Activated T-helper 1 cell treated with anti-CD3 and anti-CD28 coated beads, Interleukin-12 subunit alpha, Interleukin-12 subunit beta, Interleukin-2, Interleukin-4 antibody, amounts not matched to agents 30 ng/mL and 10 ng/mL and 1 ng/mL, durations not matched to agents 14 hours and 24 hours and 36 hours (primary cell): ENCODE measurements at regions of chr6 and their contacts with region 1.

Region 1: GRCh38 chr6:36027501-36028087 is at the start of gene MAPK14:
- DNase-seq: peak; percentile 99
- H3K4me3 Mint-ChIP-seq: peak within 1 kb of the TSS; percentile 92
- H3K27ac Mint-ChIP-seq: peak within 1 kb of the TSS; percentile 85
- H3K4me1 Mint-ChIP-seq: peaks cover 39% of the 10 kb centered on the region
- H3K27me3 Mint-ChIP-seq: peaks cover 27% of the 10 kb centered on the region
- total RNA-seq, gene MAPK14: 41.3 and 49.7 TPM in 2 replicates

Region 2: GRCh38 chr6:35920793-35921732 is 106.5 kb before region 1 on chr6 and contains the start of gene SRPK1:
- intact Hi-C with region 1: loop called (anchors 1 kb)
- DNase-seq: peak; percentile 85
- H3K4me3 Mint-ChIP-seq: peak within 1 kb of the TSS; percentile 96
- H3K27ac Mint-ChIP-seq: peak within 1 kb of the TSS; percentile 93
- H3K4me1 Mint-ChIP-seq: peaks cover 49% of the 10 kb centered on the region
- H3K27me3 Mint-ChIP-seq: no peaks in the 10 kb centered on the region
- total RNA-seq, gene SRPK1: 149 and 182 TPM in 2 replicates

Region 3: DNA sequence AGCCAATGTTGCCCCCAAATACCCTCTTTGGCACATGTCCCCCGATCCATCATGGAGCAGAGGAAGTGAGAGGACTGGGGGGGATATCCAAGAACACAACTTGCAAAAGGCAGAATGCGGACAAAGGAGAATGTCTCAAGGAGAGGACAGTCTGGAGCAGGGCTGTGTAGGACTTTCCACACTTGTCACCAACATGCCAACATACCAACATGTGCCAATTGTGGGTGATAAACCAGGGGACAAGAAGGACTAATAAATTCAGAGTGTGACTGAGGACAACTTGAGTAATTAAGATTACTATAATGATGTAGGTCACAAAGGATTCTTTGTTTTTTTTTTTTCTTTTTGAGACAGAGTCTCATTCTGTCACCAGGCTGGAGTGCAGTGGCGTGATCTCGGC is 11.9 kb before region 1 on chr6:
- intact Hi-C with region 1: no loop called
- DNase-seq: no peak
- H3K4me3 Mint-ChIP-seq: no peak overlapping the region
- H3K27ac Mint-ChIP-seq: no peak overlapping the region
- H3K4me1 Mint-ChIP-seq: no peaks in the 10 kb centered on the region
- H3K27me3 Mint-ChIP-seq: peaks cover 12% of the 10 kb centered on the region

Region 4: DNA sequence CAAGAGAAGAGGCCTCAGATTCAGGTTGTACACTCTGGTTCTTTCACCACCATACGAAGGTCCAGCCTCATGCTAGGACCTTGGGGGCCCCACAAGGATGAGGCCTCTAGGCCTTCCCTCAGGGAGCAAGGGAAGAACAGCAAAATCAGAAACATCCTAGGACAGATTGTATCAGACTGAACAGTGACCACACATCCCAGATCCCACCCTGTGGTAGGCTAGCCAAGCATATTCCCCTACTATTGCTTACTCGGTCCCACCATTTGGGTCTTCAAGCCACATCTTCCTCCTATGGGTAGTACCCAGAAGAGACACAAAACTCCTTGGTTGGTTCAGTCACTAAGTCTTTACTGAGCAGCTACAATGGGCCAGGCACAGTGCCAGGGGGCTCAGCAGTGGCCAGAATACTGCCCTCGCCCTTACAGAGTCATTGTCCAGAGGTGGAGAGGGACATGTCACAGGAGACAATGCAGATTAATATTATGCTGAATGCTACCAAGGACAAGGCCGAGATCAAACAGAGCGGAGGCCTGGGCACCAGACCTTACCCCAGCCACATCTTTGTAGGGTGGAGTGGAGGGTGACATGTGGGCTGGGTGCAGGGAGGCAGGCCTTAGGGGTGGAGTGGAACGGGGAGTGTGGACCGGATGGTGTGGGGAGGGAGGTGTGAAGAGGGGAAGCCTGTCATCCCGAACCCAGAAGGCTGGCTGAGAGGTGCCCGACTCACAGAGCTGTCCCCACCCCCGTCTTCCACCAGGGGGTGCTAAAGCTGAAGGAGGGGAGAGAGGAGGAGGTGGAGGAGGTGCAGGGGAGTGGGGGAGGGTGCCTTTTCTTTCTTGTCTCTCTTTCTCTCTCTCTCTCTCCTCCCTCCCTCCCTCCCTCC is 95.9 kb after region 1 on chr6:
- intact Hi-C with region 1: loop called (anchors 1 kb)
- DNase-seq: peak; percentile 88
- H3K4me3 Mint-ChIP-seq: peak overlapping the region; percentile 0
- H3K27ac Mint-ChIP-seq: peak overlapping the region; percentile 74
- H3K4me1 Mint-ChIP-seq: peaks cover 89% of the 10 kb centered on the region
- H3K27me3 Mint-ChIP-seq: no peaks in the 10 kb centered on the region

Region 5: GRCh38 chr6:36196880-36197548 is 169.4 kb after region 1 on chr6:
- intact Hi-C with region 1: loop called (anchors 1 kb)
- DNase-seq: peak; percentile 99
- H3K4me3 Mint-ChIP-seq: peak overlapping the region; percentile 89
- H3K27ac Mint-ChIP-seq: peak overlapping the region; percentile 87
- H3K4me1 Mint-ChIP-seq: peaks cover 40% of the 10 kb centered on the region
- H3K27me3 Mint-ChIP-seq: peaks cover 3% of the 10 kb centered on the region

Region 6: GRCh38 chr6:36360241-36361054 is 332.9 kb after region 1 on chr6:
- intact Hi-C with region 1: loop called (anchors 1 kb)
- DNase-seq: peak; percentile 56
- H3K4me3 Mint-ChIP-seq: no peak overlapping the region
- H3K27ac Mint-ChIP-seq: no peak overlapping the region
- H3K4me1 Mint-ChIP-seq: peaks cover 45% of the 10 kb centered on the region
- H3K27me3 Mint-ChIP-seq: peaks cover 16% of the 10 kb centered on the region

Region 7: DNA sequence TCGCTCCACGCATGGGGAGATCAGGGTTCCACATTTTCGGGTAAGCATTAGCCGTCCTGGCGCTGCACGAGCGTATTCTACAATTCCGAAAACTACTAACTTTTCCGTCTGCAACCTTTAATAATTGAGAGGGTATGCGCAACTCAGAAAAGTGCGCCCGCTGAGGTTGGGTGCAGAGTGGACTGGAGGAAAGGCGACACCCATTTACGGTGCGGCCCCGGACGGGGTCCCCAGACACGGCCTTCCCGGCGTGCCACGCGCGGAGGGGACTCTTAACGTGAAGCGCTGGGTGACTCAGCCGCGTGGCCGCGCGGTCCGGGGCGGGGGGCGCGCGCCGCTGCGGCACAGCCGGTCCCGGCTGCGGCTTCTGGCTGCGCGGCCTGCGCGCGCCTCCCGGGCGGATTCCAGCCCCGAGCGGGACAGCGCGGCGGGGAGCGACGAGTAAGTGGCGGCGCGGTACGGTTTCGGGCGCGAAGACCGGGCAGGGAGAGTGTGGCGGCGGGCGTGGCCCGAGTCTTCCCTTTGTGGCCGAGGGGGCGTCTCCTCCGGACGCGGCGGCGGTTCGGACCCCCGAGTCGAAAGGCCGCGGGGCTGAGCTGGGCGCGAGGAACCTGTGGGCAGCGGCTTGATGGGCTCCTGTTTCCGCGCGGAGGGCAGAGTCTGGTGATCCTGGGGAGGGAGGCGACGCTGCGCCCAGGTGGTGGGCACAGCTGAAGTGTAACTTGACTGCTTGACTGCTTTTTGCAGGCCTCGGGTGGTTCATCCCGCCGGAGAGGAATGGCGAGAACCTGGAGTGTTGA is 415.3 kb after region 1 on chr6 and contains the starts of genes KCTD20 and PXT1:
- intact Hi-C with region 1: loop called (anchors 1 kb)
- DNase-seq: peak; percentile 86
- H3K4me3 Mint-ChIP-seq: peak within 1 kb of the TSS; percentile 96
- H3K27ac Mint-ChIP-seq: peak within 1 kb of the TSS; percentile 95
- H3K4me1 Mint-ChIP-seq: peaks cover 48% of the 10 kb centered on the region
- H3K27me3 Mint-ChIP-seq: no peaks in the 10 kb centered on the region
- total RNA-seq, gene KCTD20: 62.4 and 62.8 TPM in 2 replicates
- total RNA-seq, gene PXT1: 0.16 and 0.29 TPM in 2 replicates

Region 8: GRCh38 chr6:36692220-36692619 is 664.6 kb after region 1 on chr6:
- intact Hi-C with region 1: loop called (anchors 10 kb)
- DNase-seq: peak; percentile 48
- H3K4me3 Mint-ChIP-seq: no peak overlapping the region
- H3K27ac Mint-ChIP-seq: peak overlapping the region; percentile 66
- H3K4me1 Mint-ChIP-seq: peaks cover 66% of the 10 kb centered on the region
- H3K27me3 Mint-ChIP-seq: no peaks in the 10 kb centered on the region